Psoas muscle (tissue), 8 donors: ENCODE measurements at regions of chrX and their contacts with region 1.

Region 1: DNA sequence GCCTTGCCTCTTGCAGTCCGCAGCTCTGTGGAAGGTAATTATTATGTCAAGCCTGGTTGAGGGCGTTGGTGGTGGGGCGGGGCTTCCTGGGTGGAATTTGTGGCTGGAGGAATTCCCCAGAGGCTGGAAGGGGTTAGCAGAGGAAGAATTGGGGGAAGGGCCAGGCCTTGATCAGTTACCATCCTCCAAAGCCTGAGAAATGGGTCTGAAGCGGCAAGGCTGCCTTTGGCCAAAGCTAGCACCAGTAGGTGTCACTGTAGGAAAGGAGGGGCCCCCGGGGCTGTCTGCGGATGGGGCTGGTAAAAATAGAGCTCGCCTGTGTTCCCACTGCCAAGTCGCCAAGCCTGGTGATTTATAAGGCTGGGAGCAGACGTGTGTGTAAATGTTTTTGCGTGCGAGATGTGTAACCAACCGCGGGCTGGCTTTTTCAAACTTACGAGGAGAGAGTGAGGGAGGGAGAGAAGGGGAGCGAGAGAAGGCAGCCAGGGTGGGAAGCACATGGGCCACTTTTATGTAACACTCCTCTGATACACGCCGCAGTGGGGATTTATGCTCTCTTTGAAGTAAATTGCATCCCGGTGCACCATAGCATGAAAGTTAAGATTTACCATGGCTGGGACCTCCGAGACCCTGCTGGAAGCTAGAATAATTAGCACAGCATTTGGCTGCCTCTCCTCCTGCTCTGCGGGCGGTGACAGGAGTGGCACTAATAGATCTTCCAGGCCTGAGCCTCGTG is 366.9 kb downstream of the BCOR start:
- DNase-seq: peak; percentile 67 to 82
- ATAC-seq: peak; percentile 93 to 99 (median 96)
- H3K4me3 ChIP-seq: no peak overlapping the region
- H3K27ac ChIP-seq: no peak overlapping the region
- H3K4me1 ChIP-seq: peaks cover 8% of the 10 kb centered on the region
- H3K27me3 ChIP-seq: peaks cover 0 to 22% (median 0%) of the 10 kb centered on the region in 3 donors
- CTCF ChIP-seq: peak; percentile 55

Region 2: GRCh38 chrX:39814391-39814790 is 83.6 kb after region 1 on chrX:
- intact Hi-C with region 1: loop called in 1 of 2 experiments (anchors 5 kb)
- DNase-seq: peak in 1 of 2 donors; percentile 44
- ATAC-seq: peak; percentile 50 to 70 (median 56)
- H3K4me3 ChIP-seq: no peak overlapping the region
- H3K27ac ChIP-seq: peak overlapping the region; percentile 27
- H3K4me1 ChIP-seq: no peaks in the 10 kb centered on the region
- H3K27me3 ChIP-seq: peaks cover 0 to 15% (median 0%) of the 10 kb centered on the region in 3 donors
- CTCF ChIP-seq: peak; percentile 39

Region 3: GRCh38 chrX:40175511-40176350 is 444.9 kb after region 1 on chrX:
- intact Hi-C with region 1: loop called in 1 of 2 experiments (anchors 2 kb)
- DNase-seq: peak; percentile 77 to 87
- ATAC-seq: peak; percentile 49 to 57 (median 51)
- H3K4me3 ChIP-seq: peak overlapping the region; percentile 70
- H3K27ac ChIP-seq: peak overlapping the region; percentile 86
- H3K4me1 ChIP-seq: peaks cover 10% of the 10 kb centered on the region
- H3K27me3 ChIP-seq: peaks cover 0 to 69% (median 0%) of the 10 kb centered on the region in 3 donors
- CTCF ChIP-seq: no peak